Activated CD8-positive, alpha-beta T cell treated with anti-CD3 and anti-CD28 coated beads for 36 hours (primary cell): ENCODE measurements at regions of chr7 and their contacts with region 1.

Region 1: GRCh38 chr7:154913638-154914312 is 89.1 kb downstream of the PAXIP1 start:
- DNase-seq: peak; percentile 92
- ATAC-seq: peak; percentile 94
- H3K4me3 Mint-ChIP-seq: peak overlapping the region; percentile 63
- H3K27ac Mint-ChIP-seq: no peak overlapping the region
- H3K4me1 Mint-ChIP-seq: peaks cover 5% of the 10 kb centered on the region
- H3K27me3 Mint-ChIP-seq: peaks cover 14% of the 10 kb centered on the region
- CTCF ChIP-seq: peak; percentile 91

Region 2: DNA sequence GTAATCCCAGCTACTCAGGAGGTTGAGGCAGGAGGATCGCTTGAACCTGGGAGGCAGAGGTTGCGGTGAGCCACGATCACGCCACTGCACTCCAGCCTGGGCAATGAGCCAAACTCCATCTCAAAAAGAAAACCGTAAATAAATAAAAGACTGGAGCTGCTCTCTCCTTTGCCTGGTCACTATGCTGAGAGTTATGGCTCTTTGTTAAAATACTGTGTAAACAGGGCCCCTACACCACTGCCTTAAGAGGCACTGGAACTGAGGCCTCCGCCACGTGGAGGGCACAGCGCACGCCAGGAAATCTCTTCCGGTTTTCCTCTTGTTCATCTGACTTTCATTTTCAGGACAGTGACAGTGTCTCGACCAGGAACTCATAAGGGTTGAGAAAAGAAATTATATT is 34.1 kb before region 1 on chr7:
- CTCF ChIA-PET with region 1: no interaction called
- POLR2A ChIA-PET with region 1: no interaction called
- intact Hi-C with region 1: no loop called
- DNase-seq: no peak
- ATAC-seq: no peak
- H3K4me3 Mint-ChIP-seq: no peak overlapping the region
- H3K27ac Mint-ChIP-seq: no peak overlapping the region
- H3K4me1 Mint-ChIP-seq: no peaks in the 10 kb centered on the region
- H3K27me3 Mint-ChIP-seq: peaks cover 2% of the 10 kb centered on the region
- CTCF ChIP-seq: no peak

Region 3: DNA sequence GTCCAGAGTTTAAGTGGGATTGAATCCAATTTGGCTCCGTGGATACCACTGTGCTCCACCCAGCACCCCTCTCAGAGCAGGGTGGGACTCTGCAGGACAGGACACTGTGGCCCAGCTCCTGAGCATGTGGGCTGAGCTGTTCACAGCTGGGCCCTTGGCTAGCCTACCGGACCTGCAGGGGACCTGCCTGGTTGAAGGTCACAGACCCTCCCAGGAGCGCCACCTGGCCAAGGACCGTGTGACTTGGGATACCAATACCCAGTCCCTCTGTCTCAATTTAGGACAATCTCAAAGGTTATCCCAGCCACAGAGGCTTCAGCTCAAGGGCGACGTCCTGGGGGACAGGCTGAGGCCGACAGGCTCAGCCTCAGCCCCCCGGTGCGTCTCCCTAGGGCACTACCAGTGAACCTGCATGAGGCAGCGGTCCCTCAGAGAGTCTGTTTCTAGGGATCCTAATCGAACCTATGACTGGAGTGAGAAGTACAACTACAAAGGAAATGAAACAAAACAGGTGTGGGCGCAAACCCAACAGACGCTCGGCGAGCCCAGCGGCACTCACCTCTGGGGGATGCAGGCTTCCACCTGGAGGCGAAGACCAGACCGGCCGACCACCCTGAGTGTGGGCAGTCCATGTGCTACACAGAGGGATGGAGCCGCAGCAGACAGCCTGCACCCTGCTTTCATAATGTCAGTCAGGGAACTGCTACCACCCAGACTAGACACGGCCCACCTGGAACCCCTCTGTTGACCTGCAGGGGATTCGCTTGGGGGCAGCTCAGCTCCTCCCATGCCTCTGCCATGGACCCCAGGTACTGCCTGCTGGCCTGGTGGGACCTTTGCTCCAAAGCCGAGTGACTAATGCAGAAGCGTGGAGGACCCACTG is 14.6 kb before region 1 on chr7:
- CTCF ChIA-PET with region 1: interaction called, 14 read pairs
- POLR2A ChIA-PET with region 1: no interaction called
- intact Hi-C with region 1: no loop called
- DNase-seq: no peak
- ATAC-seq: no peak
- H3K4me3 Mint-ChIP-seq: no peak overlapping the region
- H3K27ac Mint-ChIP-seq: no peak overlapping the region
- H3K4me1 Mint-ChIP-seq: no peaks in the 10 kb centered on the region
- H3K27me3 Mint-ChIP-seq: peaks cover 5% of the 10 kb centered on the region
- CTCF ChIP-seq: no peak

Region 4: GRCh38 chr7:154942691-154943090 is 28.9 kb after region 1 on chr7:
- CTCF ChIA-PET with region 1: interaction called, 25 read pairs
- POLR2A ChIA-PET with region 1: no interaction called
- intact Hi-C with region 1: no loop called
- DNase-seq: no peak
- ATAC-seq: no peak
- H3K4me3 Mint-ChIP-seq: no peak overlapping the region
- H3K27ac Mint-ChIP-seq: no peak overlapping the region
- H3K4me1 Mint-ChIP-seq: peaks cover 5% of the 10 kb centered on the region
- H3K27me3 Mint-ChIP-seq: no peaks in the 10 kb centered on the region
- CTCF ChIP-seq: no peak

Region 5: DNA sequence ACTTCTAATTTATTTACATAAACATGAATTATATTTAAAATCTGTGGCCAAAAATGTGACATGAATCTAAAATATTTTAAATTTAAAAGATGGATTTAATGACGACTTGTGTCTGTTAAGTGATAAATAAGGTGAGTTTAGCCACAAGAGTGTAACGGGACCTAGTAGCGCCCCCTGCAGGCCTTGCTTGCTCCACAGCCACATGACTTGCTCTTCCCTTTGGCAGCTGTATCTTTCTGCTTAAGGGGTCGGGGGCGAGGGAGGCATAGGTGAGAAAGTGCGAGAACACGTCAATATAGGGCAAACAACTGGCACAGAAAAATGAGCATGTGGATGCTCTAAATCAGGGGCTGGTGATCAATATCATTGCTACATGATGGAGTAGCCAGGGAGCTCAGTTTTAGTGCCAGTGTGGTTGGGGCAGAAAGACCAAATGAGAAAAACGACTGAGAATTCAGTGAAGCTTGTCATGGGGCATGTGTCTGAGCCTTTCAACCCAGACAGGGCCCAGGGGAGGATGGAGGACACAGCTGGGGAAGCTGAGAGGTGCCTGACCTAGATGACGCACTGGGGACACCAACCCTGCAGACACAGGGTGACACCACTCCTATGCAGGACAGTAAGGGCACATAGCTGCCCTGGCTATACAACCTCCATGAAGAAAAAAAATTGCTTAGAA is 39.4 kb after region 1 on chr7:
- CTCF ChIA-PET with region 1: interaction called, 38 read pairs
- POLR2A ChIA-PET with region 1: no interaction called
- intact Hi-C with region 1: no loop called
- DNase-seq: peak; percentile 85
- ATAC-seq: no peak
- H3K4me3 Mint-ChIP-seq: no peak overlapping the region
- H3K27ac Mint-ChIP-seq: no peak overlapping the region
- H3K4me1 Mint-ChIP-seq: no peaks in the 10 kb centered on the region
- H3K27me3 Mint-ChIP-seq: no peaks in the 10 kb centered on the region
- CTCF ChIP-seq: peak; percentile 67